T-cell (primary cell): ENCODE measurements at regions of chr2 and their contacts with region 1.

Region 1: DNA sequence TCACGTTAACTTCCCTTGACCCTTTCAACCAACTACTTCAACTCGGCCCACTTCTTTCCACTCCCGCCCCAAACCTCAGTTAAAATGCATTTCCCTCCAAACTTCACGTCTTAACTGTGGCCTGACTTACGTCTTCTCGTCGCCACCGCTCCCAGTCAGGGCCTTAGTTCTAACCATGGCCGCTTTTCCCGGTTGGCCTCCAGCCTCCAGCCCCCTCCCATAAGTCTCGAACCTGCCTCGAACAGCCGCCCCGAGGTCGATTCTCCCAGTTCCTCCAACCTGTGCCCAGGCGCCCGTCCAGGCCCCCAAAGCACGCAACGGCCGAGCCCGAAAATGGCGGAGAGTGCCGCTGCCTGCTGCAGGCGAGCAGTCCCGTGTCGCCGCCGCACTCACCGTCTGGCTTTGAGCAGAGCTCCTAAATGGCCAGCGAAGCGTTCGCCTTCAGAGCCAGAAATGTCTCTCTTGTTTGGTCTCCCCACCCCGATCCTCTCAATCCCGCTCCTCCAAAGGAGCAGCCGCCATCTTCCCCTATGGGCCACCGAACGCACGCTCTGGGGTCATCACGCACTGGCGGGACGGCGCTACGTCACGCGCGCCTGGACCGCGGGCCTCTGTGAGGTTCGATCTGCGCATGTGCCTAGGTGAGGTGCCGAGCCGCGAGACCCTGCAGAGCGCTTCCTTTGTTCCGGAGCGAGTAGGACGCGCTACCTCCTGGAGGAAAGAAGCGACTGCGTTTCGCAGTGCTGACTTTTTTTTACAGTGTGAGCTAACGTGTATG is at the start of gene WDR33:
- DNase-seq: peak; percentile 86 to 97 (median 92)
- ATAC-seq: peak; percentile 96 to 99 (median 98)
- H3K4me3 ChIP-seq: peak within 1 kb of the TSS; percentile 91 to 96
- H3K4me3 Mint-ChIP-seq: peak within 1 kb of the TSS; percentile 95 to 100 (median 98)
- H3K27ac ChIP-seq: peak within 1 kb of the TSS; percentile 99
- H3K27ac Mint-ChIP-seq: peak within 1 kb of the TSS; percentile 97 to 98
- H3K4me1 ChIP-seq: peaks cover 18 to 35% of the 10 kb centered on the region in 2 experiments
- H3K4me1 Mint-ChIP-seq: peaks cover 46 to 63% (median 58%) of the 10 kb centered on the region in 3 donors
- H3K27me3 ChIP-seq: no peaks in the 10 kb centered on the region
- H3K27me3 Mint-ChIP-seq: peaks cover 2 to 4% of the 10 kb centered on the region in 2 donors
- total RNA-seq, gene WDR33: 54.5 to 79.8 (median 76.2) TPM

Region 2: DNA sequence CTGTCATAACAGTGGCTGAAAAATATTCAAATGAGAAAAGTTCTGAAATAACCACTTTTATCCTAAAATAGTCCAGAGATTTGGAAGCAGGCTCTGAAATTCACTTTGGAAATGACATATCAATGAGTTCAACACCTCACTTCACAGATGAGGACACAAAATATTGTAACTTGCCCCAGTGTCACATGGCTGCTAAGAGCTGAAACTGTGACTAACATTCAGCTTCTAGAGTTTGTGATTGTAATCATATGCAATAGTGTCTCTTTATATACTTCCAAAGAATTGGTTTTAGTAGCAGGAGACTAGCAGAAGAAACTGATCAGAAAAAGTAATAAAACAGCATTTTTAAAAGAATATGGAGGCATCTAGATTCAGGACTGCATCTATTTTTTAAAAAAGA is 57.4 kb before region 1 on chr2:
- CTCF ChIA-PET with region 1: interaction called, 7 to 13 read pairs
- POLR2A ChIA-PET with region 1: no interaction called
- DNase-seq: no peak
- ATAC-seq: no peak
- H3K4me3 ChIP-seq: no peak overlapping the region
- H3K4me3 Mint-ChIP-seq: no peak overlapping the region
- H3K27ac ChIP-seq: no peak overlapping the region
- H3K27ac Mint-ChIP-seq: no peak overlapping the region
- H3K4me1 ChIP-seq: peaks cover 0 to 3% of the 10 kb centered on the region in 2 experiments
- H3K4me1 Mint-ChIP-seq: peaks cover 4 to 6% (median 6%) of the 10 kb centered on the region in 3 donors
- H3K27me3 ChIP-seq: no peaks in the 10 kb centered on the region
- H3K27me3 Mint-ChIP-seq: no peaks in the 10 kb centered on the region

Region 3: DNA sequence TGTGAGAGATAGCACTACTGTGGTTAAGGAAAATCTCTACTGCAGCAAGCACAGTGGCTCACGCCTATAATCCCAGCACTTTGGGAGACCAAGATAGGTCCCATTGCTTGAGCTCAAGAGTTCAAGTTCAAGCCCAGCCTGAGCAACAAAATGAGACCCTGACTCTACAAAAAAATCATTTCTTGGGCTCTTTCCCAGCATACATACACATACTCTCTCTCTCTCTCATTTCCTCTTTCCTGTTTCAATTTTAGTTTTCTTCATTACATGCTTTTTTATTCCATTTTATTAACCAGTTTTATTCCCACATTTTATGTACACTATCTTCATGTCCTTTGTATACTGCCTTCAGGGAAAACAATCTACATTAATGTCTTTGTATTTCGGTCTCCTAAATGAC is 14.4 kb before region 1 on chr2:
- CTCF ChIA-PET with region 1: interaction called in 1 of 2 experiments, 5 read pairs
- POLR2A ChIA-PET with region 1: interaction called, 10 to 20 read pairs
- DNase-seq: no peak
- ATAC-seq: no peak
- H3K4me3 ChIP-seq: no peak overlapping the region
- H3K4me3 Mint-ChIP-seq: peak overlapping the region in 1 of 3 donors; percentile 7
- H3K27ac ChIP-seq: no peak overlapping the region
- H3K27ac Mint-ChIP-seq: peak overlapping the region in 1 of 2 donors; percentile 7
- H3K4me1 ChIP-seq: peaks cover 11 to 43% of the 10 kb centered on the region in 2 experiments
- H3K4me1 Mint-ChIP-seq: peaks cover 71 to 76% (median 75%) of the 10 kb centered on the region in 3 donors
- H3K27me3 ChIP-seq: no peaks in the 10 kb centered on the region
- H3K27me3 Mint-ChIP-seq: no peaks in the 10 kb centered on the region

Region 4: GRCh38 chr2:128090945-128091725 is 280.3 kb after region 1 on chr2 and contains the start of gene UGGT1:
- CTCF ChIA-PET with region 1: no interaction called
- POLR2A ChIA-PET with region 1: interaction called in 1 of 2 experiments, 11 read pairs
- DNase-seq: peak; percentile 83 to 97 (median 91)
- ATAC-seq: peak; percentile 96 to 98 (median 98)
- H3K4me3 ChIP-seq: peak within 1 kb of the TSS; percentile 76 to 88
- H3K4me3 Mint-ChIP-seq: peak within 1 kb of the TSS; percentile 88 to 96 (median 92)
- H3K27ac ChIP-seq: peak within 1 kb of the TSS; percentile 78
- H3K27ac Mint-ChIP-seq: peak within 1 kb of the TSS; percentile 92 to 96
- H3K4me1 ChIP-seq: peaks cover 12 to 18% of the 10 kb centered on the region in 2 experiments
- H3K4me1 Mint-ChIP-seq: peaks cover 46 to 54% (median 48%) of the 10 kb centered on the region in 3 donors
- H3K27me3 ChIP-seq: no peaks in the 10 kb centered on the region
- H3K27me3 Mint-ChIP-seq: no peaks in the 10 kb centered on the region
- total RNA-seq, gene UGGT1: 46.0 to 50.8 (median 48.4) TPM